ENCODE measurements at regions of chr5 and their contacts with region 1.

Region 1: DNA sequence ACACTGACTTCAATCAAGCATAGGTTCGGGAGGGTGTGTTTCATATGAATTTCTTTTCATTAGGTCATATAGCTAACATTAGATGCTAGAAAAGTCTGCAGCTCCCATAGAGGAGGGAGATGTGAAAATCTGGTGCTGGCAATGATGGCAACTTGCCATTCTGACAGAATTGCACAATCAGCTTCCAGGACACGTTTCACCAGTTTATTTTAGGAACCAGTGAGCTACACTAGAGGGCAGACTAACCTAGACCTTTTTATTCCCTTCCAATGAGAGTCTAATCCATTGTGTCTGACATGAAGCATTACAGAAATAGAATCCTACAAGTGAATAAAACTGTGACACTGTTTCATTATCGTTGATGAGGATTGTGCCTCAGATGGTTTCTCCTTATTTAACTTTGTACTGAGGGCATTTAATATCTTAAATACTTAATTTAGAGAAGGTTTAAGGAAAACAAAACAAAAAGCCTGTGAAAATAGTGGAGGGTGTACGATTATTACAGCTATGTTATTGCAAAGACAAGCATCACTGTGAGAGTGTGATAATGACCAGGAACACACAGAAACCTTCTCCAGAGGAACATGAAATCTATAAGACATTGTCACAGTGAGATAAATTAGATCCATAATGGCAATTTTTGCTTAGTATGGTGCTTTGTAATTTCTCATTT is 363.3 kb upstream of the RPS23 start:
- DNase-seq: peak; percentile 81
- H3K4me3 ChIP-seq: no peak overlapping the region
- H3K27ac ChIP-seq: peak overlapping the region in 1 of 4 donors; percentile 29
- H3K4me1 ChIP-seq: peaks cover 0 to 22% (median 7%) of the 10 kb centered on the region in 4 donors
- H3K27me3 ChIP-seq: no peaks in the 10 kb centered on the region
- CTCF ChIP-seq: peak; percentile 17 to 62 (median 55)
- EP300 ChIP-seq: no peak
- POLR2A ChIP-seq: no peak

Region 2: GRCh38 chr5:82287625-82288024 is 353.8 kb before region 1 on chr5:
- intact Hi-C with region 1: no loop called
- DNase-seq: no peak
- H3K4me3 ChIP-seq: no peak overlapping the region
- H3K27ac ChIP-seq: no peak overlapping the region
- H3K4me1 ChIP-seq: peaks cover 0 to 6% (median 0%) of the 10 kb centered on the region in 4 donors
- H3K27me3 ChIP-seq: no peaks in the 10 kb centered on the region
- CTCF ChIP-seq: no peak
- EP300 ChIP-seq: no peak
- POLR2A ChIP-seq: no peak

Region 3: GRCh38 chr5:83076742-83077661 is 435.5 kb after region 1 on chr5 and contains the starts of genes TMEM167A and XRCC4:
- intact Hi-C with region 1: loop called (anchors 10 kb)
- DNase-seq: peak; percentile 99
- H3K4me3 ChIP-seq: peak within 1 kb of the TSS; percentile 74 to 88 (median 79)
- H3K27ac ChIP-seq: peak within 1 kb of the TSS; percentile 85 to 91 (median 86)
- H3K4me1 ChIP-seq: peaks cover 0 to 45% (median 32%) of the 10 kb centered on the region in 4 donors
- H3K27me3 ChIP-seq: no peaks in the 10 kb centered on the region
- CTCF ChIP-seq: no peak
- EP300 ChIP-seq: no peak
- POLR2A ChIP-seq: peak; percentile 69 to 73
- total RNA-seq, gene TMEM167A: 21.9 to 30.3 (median 22.8) TPM
- total RNA-seq, gene XRCC4: 4.6 to 7.6 (median 5.8) TPM

Region 4: GRCh38 chr5:83473346-83474163 is 832.1 kb after region 1 on chr5:
- intact Hi-C with region 1: loop called (anchors 5 kb)
- DNase-seq: peak; percentile 96
- H3K4me3 ChIP-seq: peak overlapping the region; percentile 31 to 51 (median 44)
- H3K27ac ChIP-seq: peak overlapping the region; percentile 69 to 76 (median 72)
- H3K4me1 ChIP-seq: peaks cover 0 to 40% (median 33%) of the 10 kb centered on the region in 4 donors
- H3K27me3 ChIP-seq: peaks cover 0 to 87% (median 37%) of the 10 kb centered on the region in 3 donors
- CTCF ChIP-seq: peak in 3 of 4 experiments; percentile 51 to 58 (median 58)
- EP300 ChIP-seq: peak in 1 of 4 donors; percentile 18
- POLR2A ChIP-seq: peak; percentile 15 to 35

Region 5: GRCh38 chr5:83564069-83564749 is 922.7 kb after region 1 on chr5:
- intact Hi-C with region 1: loop called (anchors 5 kb)
- DNase-seq: no peak
- H3K4me3 ChIP-seq: no peak overlapping the region
- H3K27ac ChIP-seq: peak overlapping the region in 1 of 4 donors; percentile 40
- H3K4me1 ChIP-seq: no peaks in the 10 kb centered on the region
- H3K27me3 ChIP-seq: no peaks in the 10 kb centered on the region
- CTCF ChIP-seq: peak; percentile 25 to 69 (median 50)
- EP300 ChIP-seq: no peak
- POLR2A ChIP-seq: no peak